Left cardiac atrium (tissue), 4 donors: ENCODE measurements at regions of chr17 and their contacts with region 1.

Region 1: GRCh38 chr17:55348749-55349354 is 72.8 kb downstream of the MMD start:
- DNase-seq: peak; percentile 42
- ATAC-seq: peak; percentile 73 to 81

Region 2: GRCh38 chr17:55040611-55041010 is 308.2 kb before region 1 on chr17:
- intact Hi-C with region 1: loop called in 1 of 2 experiments (anchors 10 kb)
- DNase-seq: no peak
- ATAC-seq: no peak

Region 3: DNA sequence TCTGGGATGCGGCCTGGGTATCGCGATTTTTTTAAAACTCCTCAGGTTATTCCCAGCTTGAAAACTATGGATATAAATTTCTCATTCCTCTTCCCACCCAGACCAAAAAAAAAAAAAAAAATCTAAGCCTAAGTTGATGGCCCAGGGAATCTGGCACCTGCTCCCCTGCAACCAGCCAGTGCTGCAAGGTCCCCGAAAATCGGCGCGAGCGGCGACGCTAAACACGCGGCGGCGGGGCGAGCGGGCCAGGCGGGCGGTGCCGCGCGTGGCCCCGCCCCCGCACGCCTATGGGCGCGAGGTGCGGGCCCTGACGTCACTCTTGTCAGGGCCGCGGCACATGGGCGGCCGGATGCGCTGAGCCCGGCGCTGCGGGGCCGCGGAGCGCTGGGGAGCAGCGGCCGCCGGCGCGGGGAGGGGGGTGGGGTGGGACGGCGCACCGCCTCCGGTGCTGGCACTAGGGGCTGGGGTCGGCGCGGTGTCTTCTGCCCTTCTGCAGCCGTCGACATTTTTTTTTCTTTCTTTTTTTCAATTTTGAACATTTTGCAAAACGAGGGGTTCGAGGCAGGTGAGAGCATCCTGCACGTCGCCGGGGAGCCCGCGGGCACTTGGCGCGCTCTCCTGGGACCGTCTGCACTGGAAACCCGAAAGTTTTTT is 84.1 kb before region 1 on chr17 and contains the start of gene HLF:
- intact Hi-C with region 1: loop called in 1 of 2 experiments (anchors 10 kb)
- DNase-seq: peak; percentile 86
- ATAC-seq: peak; percentile 96 to 97
- total RNA-seq, gene HLF: 36.7 to 36.8 TPM

Region 4: DNA sequence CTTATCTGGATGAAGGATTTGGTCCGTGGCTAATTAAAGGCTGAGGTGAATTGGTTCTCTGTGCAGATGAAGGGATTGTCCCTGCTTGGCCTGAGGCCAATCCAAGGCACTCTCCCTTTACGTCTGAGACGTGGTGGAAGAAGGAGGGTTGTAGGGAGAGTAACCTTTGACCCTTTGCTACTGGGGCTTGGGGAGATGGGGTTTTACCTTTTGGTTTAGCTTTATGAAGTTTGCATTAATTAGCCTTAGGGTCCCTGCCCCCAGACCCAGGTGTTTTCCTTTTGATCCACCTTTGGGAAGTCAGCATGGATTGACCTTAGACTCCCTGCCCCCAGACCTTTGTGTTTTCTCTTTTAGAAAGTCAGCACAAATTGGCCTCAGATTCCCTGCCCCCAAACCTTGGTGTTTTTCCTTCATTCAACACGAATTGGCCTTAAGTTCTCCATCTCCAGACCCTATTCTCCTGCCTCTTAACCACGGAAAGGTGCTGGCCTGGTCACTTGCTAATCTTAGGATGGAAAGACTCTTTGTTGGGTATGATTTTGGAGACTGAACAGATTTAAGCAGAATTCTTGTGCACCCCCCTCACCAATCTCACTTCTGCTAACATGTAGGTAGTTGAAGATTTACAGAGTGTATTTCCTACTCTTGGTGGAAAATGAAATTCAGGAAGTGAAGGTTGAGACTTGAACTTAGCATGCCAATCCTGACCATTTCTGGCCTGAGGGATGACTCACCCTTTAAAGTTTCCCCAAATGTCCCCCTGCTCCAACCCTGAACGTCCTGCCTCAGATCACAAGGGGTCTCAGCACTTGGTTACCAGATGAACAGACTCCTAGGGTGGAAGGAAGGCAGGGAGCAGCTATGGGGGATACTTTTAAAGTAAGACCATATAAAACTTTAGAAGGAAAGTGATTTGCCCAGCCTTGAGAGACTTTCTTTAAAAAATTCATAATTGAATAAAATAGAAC is 95.9 kb after region 1 on chr17:
- intact Hi-C with region 1: no loop called
- DNase-seq: no peak
- ATAC-seq: no peak